ENCODE measurements at regions of chr1 and their contacts with region 1.

Region 1: GRCh38 chr1:92323473-92324453 is 24.9 kb downstream of the RPAP2 start:
- DNase-seq: no peak
- H3K4me3 ChIP-seq: no peak overlapping the region
- H3K27ac ChIP-seq: no peak overlapping the region
- H3K4me1 ChIP-seq: no peaks in the 10 kb centered on the region
- H3K27me3 ChIP-seq: no peaks in the 10 kb centered on the region
- CTCF ChIP-seq: no peak
- EP300 ChIP-seq: no peak
- POLR2A ChIP-seq: no peak

Region 2: DNA sequence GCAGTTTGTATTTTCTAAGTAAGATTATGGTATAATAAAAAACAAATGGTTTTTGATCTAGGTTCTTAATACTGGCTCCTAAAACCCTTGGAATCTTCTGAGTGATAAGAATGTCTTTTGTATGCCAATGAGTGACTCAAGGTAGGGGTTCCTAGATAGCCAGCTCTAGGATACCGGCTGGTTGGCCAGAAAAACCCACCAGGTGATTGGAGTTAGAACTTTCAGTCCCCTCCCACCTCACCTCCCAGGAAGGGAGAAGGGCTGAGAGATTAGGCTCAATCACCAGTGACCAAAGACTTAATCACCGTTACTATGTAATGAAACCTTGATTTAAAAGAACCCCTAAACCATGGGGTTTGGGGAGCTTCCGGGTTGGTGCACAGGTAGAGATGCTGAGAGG is 383.3 kb before region 1 on chr1:
- in situ Hi-C with region 1: no loop called
- intact Hi-C with region 1: no loop called
- DNase-seq: no peak
- H3K4me3 ChIP-seq: no peak overlapping the region
- H3K27ac ChIP-seq: no peak overlapping the region
- H3K4me1 ChIP-seq: no peaks in the 10 kb centered on the region
- H3K27me3 ChIP-seq: no peaks in the 10 kb centered on the region
- CTCF ChIP-seq: no peak
- EP300 ChIP-seq: no peak
- POLR2A ChIP-seq: no peak

Region 3: GRCh38 chr1:92728697-92729096 is 404.9 kb after region 1 on chr1:
- in situ Hi-C with region 1: no loop called
- intact Hi-C with region 1: no loop called
- DNase-seq: no peak
- H3K4me3 ChIP-seq: no peak overlapping the region
- H3K27ac ChIP-seq: no peak overlapping the region
- H3K4me1 ChIP-seq: no peaks in the 10 kb centered on the region
- H3K27me3 ChIP-seq: no peaks in the 10 kb centered on the region
- CTCF ChIP-seq: no peak
- EP300 ChIP-seq: no peak
- POLR2A ChIP-seq: no peak

Region 4: DNA sequence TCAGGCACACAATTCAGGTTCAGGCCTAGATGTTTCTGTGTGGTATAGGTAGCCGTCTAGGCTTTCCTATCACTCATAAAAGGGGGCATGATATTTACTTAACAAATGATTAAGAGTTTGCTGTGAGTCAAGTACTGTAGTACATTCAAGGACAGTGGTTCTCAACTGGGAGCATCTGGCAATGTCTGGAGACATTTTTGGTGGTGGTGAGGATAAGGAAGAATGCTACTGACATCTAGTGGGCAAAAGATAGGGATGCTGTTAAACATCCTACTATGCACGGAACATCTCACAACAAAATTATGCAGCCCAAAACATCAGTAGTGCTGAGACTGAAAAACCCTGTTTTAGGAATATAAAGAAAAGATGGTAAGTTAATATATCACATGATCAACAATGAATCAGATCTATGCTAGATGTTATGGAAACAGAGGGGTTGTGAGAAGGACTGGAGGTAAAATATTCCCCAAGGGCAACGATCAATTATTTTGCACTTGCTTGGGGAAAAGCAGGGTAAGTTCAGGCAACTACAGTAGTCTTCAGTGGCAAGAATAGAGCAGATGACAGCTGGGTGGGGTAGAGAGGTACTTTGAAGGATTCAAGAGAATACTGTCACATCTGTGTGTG is 1550.4 kb after region 1 on chr1:
- in situ Hi-C with region 1: no loop called
- intact Hi-C with region 1: loop called (anchors 5 kb)
- DNase-seq: no peak
- H3K4me3 ChIP-seq: no peak overlapping the region
- H3K27ac ChIP-seq: no peak overlapping the region
- H3K4me1 ChIP-seq: peaks cover 10 to 27% (median 21%) of the 10 kb centered on the region in 4 donors
- H3K27me3 ChIP-seq: no peaks in the 10 kb centered on the region
- CTCF ChIP-seq: peak; percentile 23 to 54 (median 42)
- EP300 ChIP-seq: no peak
- POLR2A ChIP-seq: no peak